Sciatic nerve (tissue), 2 donors: ENCODE measurements at regions of chr5 and their contacts with region 1.

Region 1: DNA sequence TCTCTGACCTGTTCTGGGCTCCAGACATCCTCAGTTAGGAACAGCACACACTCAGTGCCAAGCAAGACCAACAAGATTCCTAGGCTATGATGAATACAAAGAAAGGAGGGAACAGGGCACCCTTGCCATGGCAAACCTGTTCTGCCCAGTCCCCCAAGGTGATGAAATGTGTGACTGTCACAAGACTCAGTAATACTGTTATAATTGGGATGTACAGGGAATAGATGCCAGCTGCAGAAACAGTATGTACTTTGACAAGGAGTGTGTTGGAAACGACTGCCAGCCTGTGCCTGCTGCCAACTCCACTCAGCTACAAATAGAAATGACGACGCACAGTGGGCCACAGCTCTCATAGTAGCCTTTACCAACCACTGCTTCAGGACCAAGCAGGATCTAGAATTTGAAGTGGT is 453.0 kb downstream of the EFNA5 start:
- DNase-seq: no peak
- ATAC-seq: peak; percentile 10

Region 2: DNA sequence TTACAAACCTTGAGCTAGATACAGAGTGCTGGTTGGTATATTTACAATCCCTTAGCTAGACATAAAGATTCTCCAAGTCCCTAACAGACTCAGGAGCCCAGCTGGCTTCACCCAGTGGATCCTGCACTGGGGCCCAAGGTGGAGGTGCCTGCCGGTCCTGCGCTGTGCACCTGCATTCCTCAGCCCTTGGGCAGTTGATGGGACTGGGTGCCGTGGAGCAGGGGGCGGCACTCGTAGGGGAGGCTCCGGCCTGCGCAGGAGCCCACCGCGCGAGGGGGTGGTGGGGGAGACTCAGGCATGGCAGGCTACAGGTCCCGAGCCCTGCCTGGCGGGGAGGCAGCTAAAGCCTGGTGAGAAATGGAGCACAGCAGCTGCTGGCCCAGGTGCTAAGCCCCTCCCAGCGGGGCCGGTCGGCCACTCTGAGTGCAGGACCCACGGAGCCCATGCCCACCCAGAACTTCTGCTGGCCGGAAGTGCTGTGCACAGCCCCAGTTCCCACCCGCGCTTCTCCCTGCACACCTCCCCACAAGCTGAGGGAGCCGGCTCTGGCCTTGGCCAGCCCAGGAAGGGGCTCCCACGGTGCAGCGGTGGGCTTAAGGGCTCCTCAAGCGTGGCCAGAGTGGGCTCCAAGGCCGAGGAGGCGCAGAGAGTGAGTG is 1011.7 kb before region 1 on chr5:
- intact Hi-C with region 1: loop called (anchors 10 kb)
- DNase-seq: no peak
- ATAC-seq: no peak

Region 3: DNA sequence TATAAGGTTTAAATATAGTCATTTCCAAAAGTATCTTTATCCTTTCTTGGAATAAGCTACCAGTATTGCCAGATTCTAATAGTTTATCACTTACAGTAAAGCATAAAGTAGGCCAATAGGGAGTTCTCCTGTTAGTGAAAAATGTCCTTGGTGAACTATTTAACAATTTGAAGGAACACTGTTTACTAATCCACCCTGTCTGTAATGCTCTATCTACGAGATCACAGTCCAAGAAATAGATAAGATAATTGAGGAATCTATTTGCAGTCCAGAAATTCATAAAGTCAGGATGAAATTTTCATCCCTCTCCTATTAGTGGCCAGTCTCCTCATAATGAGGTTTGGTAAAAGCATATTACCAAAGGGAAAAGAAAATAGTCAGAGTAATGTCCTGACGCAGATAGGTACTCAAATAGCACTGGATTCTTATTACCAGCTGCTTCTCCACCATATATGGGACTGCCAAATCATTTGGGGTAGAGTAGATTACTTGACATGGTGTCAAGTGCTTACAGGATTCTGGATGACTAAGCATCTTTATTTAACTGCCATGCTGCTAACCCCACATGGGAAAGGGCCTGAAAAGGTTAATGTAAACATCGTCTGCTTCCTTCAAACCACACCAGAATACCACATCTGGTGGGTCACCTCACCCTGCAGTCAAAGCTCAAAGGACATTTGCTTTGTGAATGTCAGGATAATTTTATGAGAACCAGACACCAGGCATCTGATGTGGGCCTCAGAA is 355.1 kb before region 1 on chr5:
- intact Hi-C with region 1: loop called (anchors 5 kb)
- DNase-seq: no peak
- ATAC-seq: no peak

Region 4: DNA sequence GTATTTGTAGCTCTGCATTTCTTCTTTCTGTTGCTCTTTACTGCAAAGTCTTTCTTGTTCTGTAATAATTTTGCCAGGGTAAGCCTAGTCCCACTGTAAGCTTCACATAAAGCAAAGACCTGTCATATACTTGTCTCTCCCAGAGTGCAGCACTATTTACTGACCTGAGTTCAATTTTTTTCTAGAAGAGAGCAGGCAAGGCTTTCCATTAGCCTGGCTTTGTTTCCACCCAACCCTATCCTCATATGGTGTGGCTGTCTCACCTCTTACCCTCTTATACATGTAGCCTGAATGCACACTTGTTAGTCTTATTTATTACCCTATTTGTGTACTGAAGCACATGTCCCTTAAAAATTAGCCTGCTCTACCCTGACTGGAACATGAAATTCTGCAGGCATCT is 282.6 kb after region 1 on chr5:
- intact Hi-C with region 1: no loop called
- DNase-seq: no peak
- ATAC-seq: no peak